Activated B cell treated with CpG ODN at 0.5 μM for 24 hours (primary cell): ENCODE measurements at regions of chr11 and their contacts with region 1.

Region 1: DNA sequence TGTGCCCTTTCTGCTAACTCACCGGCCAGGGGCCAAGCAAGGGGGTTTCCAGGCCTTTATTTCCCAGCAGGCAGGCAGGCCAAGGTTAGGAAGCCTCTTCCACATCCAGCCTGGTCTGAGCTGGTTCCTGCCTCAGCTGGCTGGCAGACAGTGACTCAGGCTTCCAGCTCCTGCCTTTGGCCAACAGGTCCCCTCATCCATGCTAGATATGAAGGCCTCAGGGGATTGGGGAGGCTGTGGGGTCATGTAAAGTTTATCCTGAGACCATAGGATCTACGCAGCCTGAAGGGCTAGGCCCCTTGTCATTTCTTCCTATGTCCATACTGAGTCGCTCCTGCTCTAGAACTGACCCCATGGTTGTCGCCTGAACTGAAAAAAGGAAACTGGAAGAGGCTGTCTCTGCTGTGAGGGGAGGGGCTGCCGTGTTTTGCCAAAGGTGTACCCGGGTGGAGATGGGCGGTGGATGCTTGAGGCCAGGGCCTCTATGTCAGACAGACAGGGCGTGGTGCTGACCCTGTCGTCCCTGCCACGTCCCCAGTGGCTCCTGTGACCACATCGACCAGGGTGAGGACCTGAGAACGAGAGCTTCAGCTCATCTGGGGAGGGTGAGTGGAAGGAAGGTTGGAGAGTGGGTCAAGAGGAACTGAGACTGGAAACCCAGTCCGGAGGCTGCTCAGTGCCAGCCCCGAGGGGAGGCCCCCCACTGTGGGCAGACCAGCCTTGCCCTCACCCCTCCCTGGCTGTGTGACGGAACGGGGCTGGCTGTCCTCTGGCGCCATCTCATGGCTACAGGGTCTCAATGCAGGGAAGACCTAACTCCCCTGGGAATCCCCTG is 17.0 kb downstream of the P2RY6 start:
- DNase-seq: peak; percentile 66
- ATAC-seq: peak; percentile 90
- H3K4me3 Mint-ChIP-seq: peak overlapping the region; percentile 68
- H3K27ac Mint-ChIP-seq: peak overlapping the region; percentile 88
- H3K4me1 Mint-ChIP-seq: peaks cover 33% of the 10 kb centered on the region
- H3K27me3 Mint-ChIP-seq: no peaks in the 10 kb centered on the region
- CTCF ChIP-seq: peak; percentile 59

Region 2: DNA sequence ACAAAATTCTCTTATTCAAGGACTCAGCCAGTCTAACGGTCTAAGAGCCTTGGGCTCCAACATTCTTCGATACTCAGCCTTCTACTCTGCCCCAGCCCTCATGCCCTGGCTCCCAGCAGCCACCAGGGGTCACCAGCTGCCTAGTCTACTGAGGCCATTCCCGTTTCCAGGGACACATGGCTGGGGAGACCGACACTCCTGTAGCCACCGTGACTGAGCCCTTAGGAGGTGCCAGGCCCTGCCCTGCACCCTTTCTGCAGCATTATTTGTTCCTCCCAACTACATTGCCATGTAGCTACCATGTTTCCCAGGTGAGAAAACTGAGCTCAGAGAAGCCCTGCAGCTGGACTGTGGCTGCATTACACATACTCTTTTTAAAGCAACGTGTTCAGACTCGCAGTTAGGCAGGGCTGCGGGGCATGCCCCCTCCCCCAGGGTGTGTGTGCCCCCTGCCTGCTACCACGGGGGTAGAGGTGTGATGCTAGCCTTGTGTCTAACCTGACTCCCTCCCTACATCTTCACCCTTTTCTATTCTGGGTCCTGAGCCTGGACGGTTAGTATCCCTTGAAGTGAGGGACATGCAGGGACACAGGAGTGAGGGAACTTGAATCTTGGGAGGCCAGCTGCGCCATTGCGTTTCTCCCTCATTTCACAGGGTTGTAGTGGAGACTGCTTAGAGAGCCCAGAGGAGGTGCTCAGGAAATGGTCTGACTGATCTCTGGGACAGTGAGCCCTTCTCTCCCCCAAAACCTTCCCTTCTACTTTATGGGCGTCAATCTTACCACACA is 457.4 kb before region 1 on chr11:
- CTCF ChIA-PET with region 1: interaction called, 8 read pairs
- POLR2A ChIA-PET with region 1: no interaction called
- intact Hi-C with region 1: loop called (anchors 1 kb)
- DNase-seq: no peak
- ATAC-seq: peak; percentile 65
- H3K4me3 Mint-ChIP-seq: no peak overlapping the region
- H3K27ac Mint-ChIP-seq: peak overlapping the region; percentile 80
- H3K4me1 Mint-ChIP-seq: peaks cover 24% of the 10 kb centered on the region
- H3K27me3 Mint-ChIP-seq: no peaks in the 10 kb centered on the region
- CTCF ChIP-seq: peak; percentile 30

Region 3: GRCh38 chr11:73236854-73237253 is 52.2 kb before region 1 on chr11:
- CTCF ChIA-PET with region 1: interaction called, 11 read pairs
- POLR2A ChIA-PET with region 1: interaction called, 5 read pairs
- intact Hi-C with region 1: loop called (anchors 1 kb)
- DNase-seq: no peak
- ATAC-seq: peak; percentile 77
- H3K4me3 Mint-ChIP-seq: no peak overlapping the region
- H3K27ac Mint-ChIP-seq: no peak overlapping the region
- H3K4me1 Mint-ChIP-seq: no peaks in the 10 kb centered on the region
- H3K27me3 Mint-ChIP-seq: peaks cover 5% of the 10 kb centered on the region
- CTCF ChIP-seq: no peak

Region 4: GRCh38 chr11:73242251-73243079 is 46.6 kb before region 1 on chr11:
- CTCF ChIA-PET with region 1: interaction called, 6 read pairs
- POLR2A ChIA-PET with region 1: interaction called, 5 read pairs
- intact Hi-C with region 1: loop called (anchors 1 kb)
- DNase-seq: peak; percentile 65
- ATAC-seq: peak; percentile 95
- H3K4me3 Mint-ChIP-seq: no peak overlapping the region
- H3K27ac Mint-ChIP-seq: no peak overlapping the region
- H3K4me1 Mint-ChIP-seq: peaks cover 4% of the 10 kb centered on the region
- H3K27me3 Mint-ChIP-seq: peaks cover 5% of the 10 kb centered on the region
- CTCF ChIP-seq: peak; percentile 47

Region 5: GRCh38 chr11:73271936-73272719 is 17.0 kb before region 1 on chr11 and contains the start of gene P2RY6:
- CTCF ChIA-PET with region 1: interaction called, 3 read pairs
- POLR2A ChIA-PET with region 1: no interaction called
- intact Hi-C with region 1: loop called (anchors 2 kb)
- DNase-seq: no peak
- ATAC-seq: peak; percentile 25
- H3K4me3 Mint-ChIP-seq: no peak within 1 kb of the TSS
- H3K27ac Mint-ChIP-seq: peak within 1 kb of the TSS; percentile 50
- H3K4me1 Mint-ChIP-seq: peaks cover 20% of the 10 kb centered on the region
- H3K27me3 Mint-ChIP-seq: peaks cover 4% of the 10 kb centered on the region
- CTCF ChIP-seq: no peak
- total RNA-seq, gene P2RY6: 0.22 TPM in 1 of 2 replicates, not detected in the other

Region 6: DNA sequence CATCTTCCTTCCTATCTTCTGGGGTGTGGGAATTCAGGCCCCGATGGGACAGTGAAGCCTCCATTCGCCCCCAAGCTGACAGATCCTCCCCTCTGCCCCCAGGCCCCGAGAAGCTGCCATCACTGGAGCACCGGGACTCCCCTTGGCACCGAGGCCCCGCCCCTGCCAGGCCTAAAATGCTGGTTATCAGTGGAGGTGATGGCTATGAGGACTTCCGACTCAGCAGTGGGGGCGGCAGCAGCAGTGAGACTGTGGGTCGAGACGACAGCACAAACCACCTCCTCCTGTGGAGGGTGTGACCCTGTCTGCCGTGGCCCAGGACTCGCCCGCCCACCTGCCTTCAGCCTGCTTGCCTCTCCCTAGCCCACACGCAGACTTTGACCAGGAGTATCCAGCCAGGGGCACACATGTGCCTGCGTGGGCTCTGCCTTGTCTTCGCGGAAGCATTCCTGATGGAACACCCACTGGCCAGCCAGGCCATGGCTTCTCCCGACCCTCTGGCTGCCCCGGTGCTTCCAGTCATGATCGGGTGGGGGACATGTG is 78.5 kb after region 1 on chr11:
- CTCF ChIA-PET with region 1: no interaction called
- POLR2A ChIA-PET with region 1: no interaction called
- intact Hi-C with region 1: no loop called
- DNase-seq: no peak
- ATAC-seq: peak; percentile 35
- H3K4me3 Mint-ChIP-seq: peak overlapping the region; percentile 11
- H3K27ac Mint-ChIP-seq: peak overlapping the region; percentile 69
- H3K4me1 Mint-ChIP-seq: peaks cover 61% of the 10 kb centered on the region
- H3K27me3 Mint-ChIP-seq: no peaks in the 10 kb centered on the region
- CTCF ChIP-seq: no peak

Region 7: DNA sequence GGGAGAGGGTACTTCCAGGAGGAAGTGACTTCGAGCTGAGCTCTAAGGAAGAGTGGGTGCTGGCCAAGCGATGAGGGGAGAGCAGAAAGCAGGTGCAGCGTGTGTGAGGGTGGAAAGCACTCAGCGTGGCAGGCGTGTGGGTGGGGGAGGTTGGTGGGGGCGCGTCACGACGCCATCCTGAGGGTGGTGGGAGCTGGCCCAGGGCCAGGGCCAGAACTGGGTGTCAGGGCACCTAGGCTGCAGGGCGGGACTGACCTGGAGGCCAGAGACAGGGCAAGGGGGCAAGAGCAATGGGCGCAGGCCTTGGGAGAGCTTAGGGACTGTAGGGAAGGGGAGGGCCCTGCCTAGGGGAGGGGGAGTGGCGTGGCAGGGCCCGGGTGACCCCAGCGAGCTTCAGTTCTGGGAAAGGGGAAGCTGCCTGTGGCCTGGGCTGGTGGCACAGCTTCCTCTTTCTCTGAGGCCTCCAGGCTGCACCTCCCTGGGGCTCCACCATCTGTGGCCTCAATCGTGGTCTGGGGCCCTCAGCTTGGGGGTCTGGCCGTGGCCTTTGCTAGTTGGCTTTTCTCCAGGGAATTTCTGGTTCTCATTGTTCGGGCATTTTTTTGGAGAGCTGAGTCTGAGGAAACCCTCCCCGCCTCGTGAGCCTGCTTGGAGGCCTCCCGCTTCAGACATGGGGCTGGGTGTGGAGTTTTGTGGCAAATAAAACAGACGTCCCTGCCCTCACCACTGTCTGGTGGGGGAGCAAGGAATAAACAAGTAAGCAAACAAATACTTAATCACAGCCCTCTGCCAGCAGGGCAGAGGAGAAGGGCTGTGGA is 96.0 kb after region 1 on chr11:
- CTCF ChIA-PET with region 1: no interaction called
- POLR2A ChIA-PET with region 1: interaction called, 3 read pairs
- intact Hi-C with region 1: loop called (anchors 5 kb)
- DNase-seq: peak; percentile 82
- ATAC-seq: peak; percentile 63
- H3K4me3 Mint-ChIP-seq: peak overlapping the region; percentile 76
- H3K27ac Mint-ChIP-seq: peak overlapping the region; percentile 89
- H3K4me1 Mint-ChIP-seq: peaks cover 100% of the 10 kb centered on the region
- H3K27me3 Mint-ChIP-seq: no peaks in the 10 kb centered on the region
- CTCF ChIP-seq: no peak